ENCODE measurements at regions of chr13 and their contacts with region 1.

Region 1: DNA sequence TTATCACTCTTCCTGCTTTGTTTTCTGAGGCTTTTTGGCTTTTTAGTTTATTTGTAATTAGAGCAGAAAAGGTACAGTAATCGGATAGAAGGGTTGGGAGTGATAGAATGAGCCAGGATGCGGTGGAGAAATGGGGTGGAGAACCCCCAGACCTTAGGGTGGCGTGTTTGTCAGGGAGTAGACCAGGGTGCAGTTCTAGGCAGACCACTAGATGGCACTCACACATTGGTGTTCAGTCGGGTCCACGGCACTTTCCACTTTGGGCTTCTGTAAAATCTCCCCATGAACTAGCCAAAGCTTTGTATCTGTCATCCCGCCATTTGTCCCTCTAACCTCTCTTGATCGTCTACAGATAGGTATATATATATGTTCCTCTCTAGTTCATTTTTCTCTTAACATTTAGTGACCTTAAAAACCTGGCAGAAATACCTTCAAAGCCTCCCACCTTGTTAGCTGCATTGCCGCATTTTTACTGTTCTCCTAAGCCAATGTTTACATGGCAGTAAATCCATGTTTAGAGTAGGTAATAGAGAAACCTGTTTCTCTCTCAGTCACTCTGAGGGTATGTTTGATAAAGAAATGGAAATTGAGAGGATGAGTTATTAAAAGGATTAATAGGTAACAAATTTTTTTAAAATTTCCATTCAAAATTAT is 154.9 kb downstream of the TM9SF2 start:
- DNase-seq: peak; percentile 74 to 93 (median 82)
- ATAC-seq: peak; percentile 61
- H3K4me3 ChIP-seq: peak overlapping the region; percentile 37
- H3K4me3 Mint-ChIP-seq: peak overlapping the region; percentile 76
- H3K27ac ChIP-seq: peak overlapping the region; percentile 19 to 29
- H3K27ac Mint-ChIP-seq: peak overlapping the region; percentile 97
- H3K4me1 ChIP-seq: peaks cover 37% of the 10 kb centered on the region
- H3K4me1 Mint-ChIP-seq: peaks cover 48% of the 10 kb centered on the region
- H3K27me3 ChIP-seq: no peaks in the 10 kb centered on the region
- H3K27me3 Mint-ChIP-seq: no peaks in the 10 kb centered on the region
- CTCF ChIP-seq: peak; percentile 93

Region 2: DNA sequence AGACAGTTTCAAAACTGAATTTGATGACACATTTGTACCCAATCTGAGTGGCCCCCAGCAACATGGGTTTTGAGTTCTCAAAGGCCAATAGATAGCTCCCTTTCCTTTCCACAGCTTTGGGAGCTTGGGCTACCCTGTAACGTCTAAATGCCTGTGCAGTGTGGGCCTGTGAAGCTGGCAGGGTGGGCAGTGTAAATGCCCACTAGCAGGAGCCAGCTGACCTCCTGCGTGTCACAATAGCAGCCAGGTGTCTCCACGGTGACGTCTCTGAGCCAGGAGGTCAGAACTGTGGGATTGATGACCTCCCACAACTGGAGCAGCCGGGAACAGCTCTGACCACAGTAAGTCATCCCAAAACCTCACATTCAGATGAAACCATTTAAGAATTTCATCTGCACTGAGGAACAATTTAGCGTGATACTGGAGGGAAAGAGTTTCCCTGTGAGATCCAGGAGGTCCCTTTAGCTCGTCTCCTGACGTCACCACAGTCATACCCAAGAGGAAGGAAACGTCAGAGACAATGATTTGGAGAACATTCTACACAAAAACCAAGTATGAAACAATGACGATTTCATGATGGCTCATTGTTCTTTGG is 1702.7 kb before region 1 on chr13 and contains the start of gene IPO5:
- CTCF ChIA-PET with region 1: no interaction called
- POLR2A ChIA-PET with region 1: no interaction called
- intact Hi-C with region 1: no loop called
- DNase-seq: no peak
- ATAC-seq: no peak
- H3K4me3 ChIP-seq: no peak within 1 kb of the TSS
- H3K4me3 Mint-ChIP-seq: no peak within 1 kb of the TSS
- H3K27ac ChIP-seq: no peak within 1 kb of the TSS
- H3K27ac Mint-ChIP-seq: no peak within 1 kb of the TSS
- H3K4me1 ChIP-seq: no peaks in the 10 kb centered on the region
- H3K4me1 Mint-ChIP-seq: no peaks in the 10 kb centered on the region
- H3K27me3 ChIP-seq: no peaks in the 10 kb centered on the region
- H3K27me3 Mint-ChIP-seq: peaks cover 7% of the 10 kb centered on the region
- CTCF ChIP-seq: no peak
- total RNA-seq, gene IPO5: 62.2 to 73.3 TPM

Region 3: DNA sequence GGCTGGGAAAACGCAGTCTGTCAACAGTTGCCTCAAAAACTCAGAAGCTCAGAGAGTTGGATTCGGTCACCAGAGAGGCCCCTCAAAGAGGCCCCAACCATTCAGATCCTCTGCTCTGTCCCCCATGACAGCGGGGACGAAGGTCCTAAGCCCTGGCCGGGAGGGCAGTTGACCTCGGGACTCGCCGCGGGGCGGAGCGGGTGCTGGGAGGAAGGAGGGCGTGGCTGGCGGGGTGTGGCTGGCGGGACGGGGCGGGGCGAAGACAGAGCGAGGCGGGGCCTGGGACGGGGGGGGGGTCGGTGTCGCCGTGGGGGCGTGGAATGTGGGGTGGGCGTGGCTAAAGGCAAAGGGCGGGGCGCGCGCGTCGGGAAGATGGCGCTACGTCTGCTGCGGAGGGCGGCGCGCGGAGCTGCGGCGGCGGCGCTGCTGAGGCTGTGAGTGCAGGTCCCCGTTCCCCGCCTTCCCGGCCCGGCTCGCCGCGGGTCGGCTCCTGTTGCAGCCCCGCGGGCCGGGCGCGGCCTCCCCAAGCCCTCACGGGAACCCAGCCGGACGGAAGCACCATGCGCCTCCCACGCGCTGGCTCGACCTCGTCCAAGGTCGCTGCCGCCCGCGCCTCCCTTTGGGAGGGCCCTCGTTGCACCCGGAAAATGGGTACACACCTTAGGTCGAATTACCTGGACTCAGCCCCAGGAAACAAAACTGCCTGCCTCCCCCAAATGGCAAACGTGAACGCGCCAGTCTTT is 49.7 kb before region 1 on chr13:
- CTCF ChIA-PET with region 1: interaction called, 4 read pairs
- POLR2A ChIA-PET with region 1: interaction called, 29 read pairs
- intact Hi-C with region 1: loop called (anchors 2 to 5 kb)
- DNase-seq: peak; percentile 85 to 97 (median 92)
- ATAC-seq: peak; percentile 88
- H3K4me3 ChIP-seq: peak within 1 kb of the TSS; percentile 73
- H3K4me3 Mint-ChIP-seq: peak within 1 kb of the TSS; percentile 96
- H3K27ac ChIP-seq: peak within 1 kb of the TSS; percentile 37 to 83
- H3K27ac Mint-ChIP-seq: peak within 1 kb of the TSS; percentile 91
- H3K4me1 ChIP-seq: peaks cover 32% of the 10 kb centered on the region
- H3K4me1 Mint-ChIP-seq: peaks cover 62% of the 10 kb centered on the region
- H3K27me3 ChIP-seq: no peaks in the 10 kb centered on the region
- H3K27me3 Mint-ChIP-seq: no peaks in the 10 kb centered on the region
- CTCF ChIP-seq: peak; percentile 4

Region 4: GRCh38 chr13:99916366-99917103 is 260.3 kb after region 1 on chr13:
- CTCF ChIA-PET with region 1: interaction called, 5 read pairs
- POLR2A ChIA-PET with region 1: interaction called, 3 read pairs
- intact Hi-C with region 1: loop called (anchors 1 kb)
- DNase-seq: peak in 3 of 14 experiments; percentile 64 to 74 (median 73)
- ATAC-seq: peak; percentile 83
- H3K4me3 ChIP-seq: no peak overlapping the region
- H3K4me3 Mint-ChIP-seq: no peak overlapping the region
- H3K27ac ChIP-seq: no peak overlapping the region
- H3K27ac Mint-ChIP-seq: no peak overlapping the region
- H3K4me1 ChIP-seq: peaks cover 21% of the 10 kb centered on the region
- H3K4me1 Mint-ChIP-seq: peaks cover 8% of the 10 kb centered on the region
- H3K27me3 ChIP-seq: no peaks in the 10 kb centered on the region
- H3K27me3 Mint-ChIP-seq: peaks cover 16% of the 10 kb centered on the region
- CTCF ChIP-seq: peak; percentile 95

Region 5: DNA sequence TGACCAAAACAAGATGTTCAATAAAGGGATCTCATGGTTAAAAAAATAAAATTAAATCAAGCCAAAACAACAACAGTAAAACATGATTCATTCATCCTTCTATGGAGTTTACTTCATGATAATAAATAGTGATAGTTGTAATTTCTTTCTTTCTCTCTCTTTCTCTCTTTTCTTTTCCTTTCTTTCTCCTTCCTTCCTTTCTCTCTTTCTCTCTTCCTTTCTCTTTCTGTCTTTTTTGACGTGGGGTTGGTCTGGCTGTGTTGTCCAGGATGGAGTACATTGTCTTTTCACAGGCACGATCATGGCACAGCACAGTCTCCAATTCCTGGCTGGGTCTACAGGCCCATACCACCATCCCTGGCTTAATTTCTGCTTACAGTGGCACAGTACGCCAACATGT is 403.6 kb after region 1 on chr13:
- CTCF ChIA-PET with region 1: no interaction called
- POLR2A ChIA-PET with region 1: no interaction called
- intact Hi-C with region 1: no loop called
- DNase-seq: no peak
- ATAC-seq: no peak
- H3K4me3 ChIP-seq: no peak overlapping the region
- H3K4me3 Mint-ChIP-seq: no peak overlapping the region
- H3K27ac ChIP-seq: no peak overlapping the region
- H3K27ac Mint-ChIP-seq: no peak overlapping the region
- H3K4me1 ChIP-seq: no peaks in the 10 kb centered on the region
- H3K4me1 Mint-ChIP-seq: no peaks in the 10 kb centered on the region
- H3K27me3 ChIP-seq: peaks cover 0 to 2% of the 10 kb centered on the region in 2 experiments
- H3K27me3 Mint-ChIP-seq: peaks cover 9% of the 10 kb centered on the region
- CTCF ChIP-seq: no peak

Region 6: GRCh38 chr13:100235311-100235901 is 579.2 kb after region 1 on chr13:
- CTCF ChIA-PET with region 1: interaction called, 13 read pairs
- POLR2A ChIA-PET with region 1: interaction called, 15 read pairs
- intact Hi-C with region 1: loop called (anchors 1 kb)
- DNase-seq: peak in 4 of 14 experiments; percentile 27 to 67 (median 65)
- ATAC-seq: no peak
- H3K4me3 ChIP-seq: no peak overlapping the region
- H3K4me3 Mint-ChIP-seq: no peak overlapping the region
- H3K27ac ChIP-seq: no peak overlapping the region
- H3K27ac Mint-ChIP-seq: no peak overlapping the region
- H3K4me1 ChIP-seq: peaks cover 4% of the 10 kb centered on the region
- H3K4me1 Mint-ChIP-seq: no peaks in the 10 kb centered on the region
- H3K27me3 ChIP-seq: no peaks in the 10 kb centered on the region
- H3K27me3 Mint-ChIP-seq: no peaks in the 10 kb centered on the region
- CTCF ChIP-seq: peak; percentile 85

Region 7: DNA sequence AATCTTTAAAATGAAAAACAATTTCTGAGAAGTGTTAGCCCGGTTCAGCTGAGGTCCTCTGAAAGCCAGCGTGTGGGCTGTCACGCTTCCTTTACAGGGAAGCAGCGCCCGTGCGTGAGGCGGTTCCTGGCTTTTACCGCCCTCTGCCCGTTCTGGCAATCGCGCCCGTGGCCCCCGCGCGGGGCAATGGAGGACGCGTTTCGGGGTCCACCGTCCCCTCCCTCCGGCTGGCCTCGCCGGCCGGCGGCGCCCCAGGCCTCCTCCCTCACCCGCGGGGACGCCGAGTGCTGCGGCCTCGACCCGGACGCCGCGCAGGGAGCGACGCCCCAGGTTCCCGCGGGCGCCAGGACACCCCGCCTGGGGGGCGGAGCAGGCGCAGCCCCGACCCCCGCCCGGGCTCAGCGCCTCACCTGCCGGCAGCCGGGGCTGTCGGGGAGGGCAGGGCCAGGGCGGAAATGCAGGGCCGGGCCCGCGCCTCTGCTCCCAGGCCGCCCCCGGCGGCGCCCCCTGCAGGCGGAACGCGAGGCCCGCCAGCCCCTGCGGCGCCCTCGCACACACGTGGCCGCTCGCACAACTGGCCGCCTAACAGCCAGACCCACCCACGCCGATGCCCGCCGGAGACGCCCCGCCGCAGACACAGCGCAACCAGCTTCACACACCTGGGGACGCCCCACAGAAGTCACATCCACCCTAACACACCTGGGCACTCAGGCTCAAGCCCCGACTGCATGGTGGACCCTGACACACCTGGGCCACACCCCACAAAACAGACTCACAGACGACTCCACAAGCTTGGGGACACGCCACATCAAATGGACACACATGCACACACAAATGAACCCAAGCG is 932.3 kb after region 1 on chr13 and contains the start of gene GGACT:
- CTCF ChIA-PET with region 1: interaction called, 8 read pairs
- POLR2A ChIA-PET with region 1: interaction called, 16 read pairs
- intact Hi-C with region 1: loop called in 1 of 2 experiments (anchors 5 kb)
- DNase-seq: peak; percentile 69 to 92 (median 86)
- ATAC-seq: peak; percentile 92
- H3K4me3 ChIP-seq: peak within 1 kb of the TSS; percentile 67
- H3K4me3 Mint-ChIP-seq: peak within 1 kb of the TSS; percentile 90
- H3K27ac ChIP-seq: peak within 1 kb of the TSS; percentile 72 to 79
- H3K27ac Mint-ChIP-seq: peak within 1 kb of the TSS; percentile 92
- H3K4me1 ChIP-seq: peaks cover 26% of the 10 kb centered on the region
- H3K4me1 Mint-ChIP-seq: peaks cover 51% of the 10 kb centered on the region
- H3K27me3 ChIP-seq: no peaks in the 10 kb centered on the region
- H3K27me3 Mint-ChIP-seq: no peaks in the 10 kb centered on the region
- CTCF ChIP-seq: peak; percentile 71
- total RNA-seq, gene GGACT: 2.4 to 2.9 TPM

Region 8: DNA sequence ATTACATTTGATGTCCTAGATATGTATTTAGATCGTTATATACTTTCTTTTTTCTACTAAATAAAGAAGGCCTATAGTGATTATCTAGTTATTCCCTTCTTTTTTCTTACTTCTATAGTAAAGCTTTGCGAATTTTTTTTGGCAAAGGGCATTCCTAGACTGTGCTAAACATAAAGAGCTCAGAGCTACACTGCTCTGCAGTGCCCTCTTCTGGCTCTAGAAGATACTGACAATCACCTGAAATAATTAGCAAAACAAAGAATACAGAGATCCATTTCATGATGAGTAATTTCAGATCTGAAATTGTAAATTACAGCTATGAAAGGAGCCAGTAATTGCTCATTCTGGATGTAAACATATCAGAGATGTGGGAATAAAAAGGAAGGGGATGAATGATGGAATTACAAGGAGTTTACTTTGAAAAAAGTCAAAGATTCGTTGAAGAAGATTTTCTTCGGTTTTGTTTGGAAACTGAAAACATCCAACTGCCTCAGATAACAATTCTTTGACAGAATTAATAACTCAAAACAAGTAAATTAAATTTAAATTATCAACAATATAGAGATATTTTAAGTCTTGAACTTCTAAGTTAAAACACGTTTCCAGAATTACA is 1471.6 kb after region 1 on chr13:
- CTCF ChIA-PET with region 1: interaction called, 7 read pairs
- POLR2A ChIA-PET with region 1: no interaction called
- intact Hi-C with region 1: loop called (anchors 1 to 2 kb)
- DNase-seq: peak in 5 of 14 experiments; percentile 1 to 57 (median 34)
- ATAC-seq: peak; percentile 73
- H3K4me3 ChIP-seq: no peak overlapping the region
- H3K4me3 Mint-ChIP-seq: no peak overlapping the region
- H3K27ac ChIP-seq: no peak overlapping the region
- H3K27ac Mint-ChIP-seq: no peak overlapping the region
- H3K4me1 ChIP-seq: no peaks in the 10 kb centered on the region
- H3K4me1 Mint-ChIP-seq: no peaks in the 10 kb centered on the region
- H3K27me3 ChIP-seq: no peaks in the 10 kb centered on the region
- H3K27me3 Mint-ChIP-seq: peaks cover 11% of the 10 kb centered on the region
- CTCF ChIP-seq: peak; percentile 72

Measured in CD4-positive, alpha-beta T cell (primary cell).